ENCODE measurements at regions of chr1 and their contacts with region 1.

Region 1: DNA sequence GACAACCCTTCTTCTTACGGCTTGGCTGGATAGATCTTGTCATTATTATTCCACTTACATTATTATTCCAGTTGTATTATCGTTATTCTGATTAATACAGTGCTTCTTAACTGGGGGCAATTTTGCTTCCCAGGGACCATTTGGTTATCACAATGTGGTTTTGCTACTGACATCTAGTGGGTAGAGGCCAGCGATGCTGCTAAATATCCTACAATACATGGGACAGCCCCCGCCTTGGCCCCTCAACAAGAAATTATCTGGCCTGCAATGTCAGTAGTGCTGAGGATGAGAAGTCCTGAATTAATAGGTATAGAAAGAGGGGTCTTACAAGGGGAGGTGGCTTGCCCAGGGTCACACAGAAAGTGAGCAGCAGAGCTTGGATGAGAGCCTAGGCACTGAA is 105.6 kb downstream of the PTPRU start:
- DNase-seq: no peak
- H3K4me3 ChIP-seq: no peak overlapping the region
- H3K27ac ChIP-seq: no peak overlapping the region
- H3K4me1 ChIP-seq: no peaks in the 10 kb centered on the region
- H3K27me3 ChIP-seq: peaks cover 5% of the 10 kb centered on the region
- CTCF ChIP-seq: peak; percentile 42

Region 2: DNA sequence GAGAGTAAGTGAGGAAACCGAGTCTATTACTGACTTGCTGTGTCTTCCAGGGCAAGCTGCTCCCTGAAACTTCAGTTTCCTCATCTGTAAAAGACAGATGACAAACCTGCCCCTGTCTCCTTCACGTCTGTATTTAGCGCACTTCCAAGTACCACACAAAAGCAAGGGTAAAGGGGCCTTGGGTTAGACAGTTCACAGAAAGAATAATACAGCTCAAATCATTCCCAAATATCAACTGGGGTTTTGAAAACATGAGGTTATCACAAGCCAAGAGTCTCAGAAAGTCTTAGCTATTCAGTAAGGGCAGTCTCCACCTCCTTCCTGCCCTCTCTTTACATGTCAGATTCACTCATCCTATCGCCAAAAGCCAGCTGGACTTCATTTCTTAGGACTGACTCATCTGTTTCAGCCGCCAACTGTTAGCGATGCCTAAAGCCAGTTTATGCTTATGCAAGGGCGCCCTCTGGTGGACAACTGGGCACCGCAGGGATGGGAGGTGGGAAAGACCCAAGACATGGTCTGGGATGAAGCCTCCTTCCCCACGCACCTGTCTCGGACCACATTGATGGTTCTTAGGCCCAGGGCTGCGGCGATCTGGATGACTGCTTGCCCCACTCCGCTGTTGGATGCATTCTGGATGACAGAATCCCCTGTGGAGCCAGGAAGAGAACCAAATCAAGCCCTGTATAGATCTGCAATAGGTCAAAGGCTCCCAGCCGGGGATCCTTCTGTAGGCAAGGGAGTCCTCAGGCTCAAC is 139.2 kb before region 1 on chr1:
- CTCF ChIA-PET with region 1: no interaction called
- POLR2A ChIA-PET with region 1: no interaction called
- intact Hi-C with region 1: no loop called
- DNase-seq: peak; percentile 95
- H3K4me3 ChIP-seq: no peak overlapping the region
- H3K27ac ChIP-seq: peak overlapping the region; percentile 1
- H3K4me1 ChIP-seq: peaks cover 8% of the 10 kb centered on the region
- H3K27me3 ChIP-seq: no peaks in the 10 kb centered on the region
- CTCF ChIP-seq: peak; percentile 98

Region 3: GRCh38 chr1:29230553-29231378 is 111.2 kb before region 1 on chr1 and contains the start of gene MECR:
- CTCF ChIA-PET with region 1: no interaction called
- POLR2A ChIA-PET with region 1: no interaction called
- intact Hi-C with region 1: loop called (anchors 10 kb)
- DNase-seq: peak; percentile 95
- H3K4me3 ChIP-seq: peak within 1 kb of the TSS; percentile 84
- H3K27ac ChIP-seq: peak within 1 kb of the TSS; percentile 81
- H3K4me1 ChIP-seq: peaks cover 12% of the 10 kb centered on the region
- H3K27me3 ChIP-seq: no peaks in the 10 kb centered on the region
- CTCF ChIP-seq: peak; percentile 43; the same call in 1 of the 2 replicates
- total RNA-seq, gene MECR: 39.0 and 39.3 TPM in 2 replicates

Region 4: DNA sequence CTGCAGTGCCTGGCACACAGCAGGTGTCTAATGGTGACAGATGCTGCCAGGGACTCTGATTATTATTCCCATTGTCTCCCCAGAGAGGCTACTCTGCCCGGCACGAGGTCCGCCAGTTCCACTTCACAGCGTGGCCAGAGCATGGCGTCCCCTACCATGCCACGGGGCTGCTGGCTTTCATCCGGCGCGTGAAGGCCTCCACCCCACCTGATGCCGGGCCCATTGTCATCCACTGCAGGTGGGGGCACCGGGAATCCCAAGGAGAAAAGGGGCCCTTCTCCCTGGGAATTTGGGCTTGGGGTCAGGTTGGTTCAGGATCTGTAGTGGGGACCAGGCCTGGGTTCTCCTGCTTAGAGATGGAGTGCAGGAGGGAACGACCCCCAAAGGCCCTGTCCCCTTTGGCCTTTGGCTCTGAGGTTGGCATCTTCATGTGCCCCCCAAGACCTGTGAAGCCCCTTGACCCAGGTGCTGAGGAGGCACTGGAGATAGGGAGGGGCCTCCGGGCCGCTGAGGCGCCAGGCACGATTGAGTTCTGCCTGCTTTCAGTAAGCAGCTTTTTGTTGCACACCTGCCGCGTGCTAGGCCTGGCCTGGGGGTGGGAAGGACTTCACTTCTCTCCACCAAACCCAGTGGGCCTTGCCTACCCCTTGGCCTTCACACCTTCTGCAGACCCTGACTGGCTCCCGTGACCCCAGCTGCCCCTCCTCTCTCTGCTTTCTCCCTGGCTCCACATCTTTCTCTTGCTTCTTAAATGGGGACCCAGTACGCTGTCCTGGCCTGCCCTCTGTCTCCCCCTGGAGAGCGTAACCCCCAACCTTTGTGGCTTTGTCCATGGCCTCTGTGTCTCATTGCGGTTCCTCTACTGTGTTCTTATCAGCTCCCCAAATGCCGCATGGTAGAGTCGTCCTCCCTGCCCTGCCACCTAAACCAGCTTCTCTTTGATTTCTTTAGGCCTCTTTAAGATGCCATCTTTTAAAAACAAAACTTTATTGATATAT is 29.2 kb before region 1 on chr1:
- CTCF ChIA-PET with region 1: no interaction called
- POLR2A ChIA-PET with region 1: no interaction called
- intact Hi-C with region 1: no loop called
- DNase-seq: no peak
- H3K4me3 ChIP-seq: no peak overlapping the region
- H3K27ac ChIP-seq: no peak overlapping the region
- H3K4me1 ChIP-seq: no peaks in the 10 kb centered on the region
- H3K27me3 ChIP-seq: no peaks in the 10 kb centered on the region
- CTCF ChIP-seq: no peak

Region 5: DNA sequence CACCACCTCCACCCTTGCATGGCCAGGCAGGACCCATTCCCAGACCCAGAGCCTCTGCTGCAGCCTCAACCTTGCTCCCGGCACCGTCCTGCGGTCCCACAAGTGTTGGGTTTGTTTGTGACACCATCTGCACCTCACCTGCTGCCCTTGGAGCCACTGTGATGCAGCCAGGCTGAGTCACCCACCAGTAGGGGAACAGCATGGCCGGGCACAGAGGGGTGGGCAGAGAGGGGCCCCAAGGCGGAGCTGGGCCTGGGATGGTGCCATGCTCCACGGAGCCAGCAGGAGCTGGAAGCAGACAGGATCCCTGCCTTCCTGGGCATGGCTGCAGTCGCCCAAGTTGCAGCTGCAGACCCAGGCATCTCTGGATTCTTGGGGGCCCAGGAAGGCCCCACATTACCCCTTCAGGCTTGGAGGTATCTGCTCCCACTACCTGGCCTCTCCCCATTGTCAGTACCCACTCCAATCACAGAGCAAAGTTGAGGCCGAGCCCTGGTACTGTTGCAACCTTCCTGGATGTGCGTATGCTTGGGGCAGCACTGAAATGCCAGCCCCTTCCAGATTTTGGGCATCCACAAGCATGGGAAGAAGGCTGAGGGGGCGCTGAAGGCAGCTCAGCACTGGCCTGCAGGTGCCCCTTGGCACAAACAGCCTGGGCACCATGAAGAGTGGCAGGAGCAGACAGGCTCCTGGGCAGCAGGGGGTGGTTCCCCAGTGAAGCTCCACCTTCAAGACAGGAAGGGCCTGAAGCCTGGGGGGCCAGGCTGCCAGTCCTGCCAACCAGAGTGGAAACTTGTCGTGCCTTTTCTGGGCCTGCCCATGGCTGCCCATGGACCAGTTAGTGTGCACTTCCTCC is 1208.7 kb after region 1 on chr1:
- CTCF ChIA-PET with region 1: no interaction called
- POLR2A ChIA-PET with region 1: no interaction called
- intact Hi-C with region 1: no loop called
- DNase-seq: no peak
- H3K4me3 ChIP-seq: no peak overlapping the region
- H3K27ac ChIP-seq: no peak overlapping the region
- H3K4me1 ChIP-seq: no peaks in the 10 kb centered on the region
- H3K27me3 ChIP-seq: no peaks in the 10 kb centered on the region
- CTCF ChIP-seq: no peak

Measured in A673 (cell line).